Sciatic nerve (tissue), 2 donors: ENCODE measurements at regions of chr7 and their contacts with region 1.

Region 1: DNA sequence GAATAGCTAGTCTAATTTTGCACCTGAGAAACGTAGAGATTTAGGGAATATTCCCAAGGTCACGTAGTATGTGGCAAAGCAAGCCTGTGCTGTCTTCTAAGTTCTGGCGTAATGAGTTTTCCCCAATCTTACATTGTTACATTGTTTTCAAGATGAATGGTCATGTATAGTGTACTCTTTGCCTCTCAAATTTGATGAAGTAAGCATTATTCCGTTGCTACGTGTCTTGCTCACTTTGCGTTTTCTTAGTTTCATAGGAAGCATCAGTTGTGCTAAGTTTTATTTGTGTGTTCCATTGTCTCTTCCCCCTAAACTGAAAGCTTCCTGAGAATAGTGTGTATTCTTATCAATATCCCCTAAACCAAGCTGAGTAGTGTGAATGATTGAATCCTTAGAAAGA is 637.6 kb upstream of the C7orf33 start:
- DNase-seq: no peak
- ATAC-seq: no peak

Region 2: DNA sequence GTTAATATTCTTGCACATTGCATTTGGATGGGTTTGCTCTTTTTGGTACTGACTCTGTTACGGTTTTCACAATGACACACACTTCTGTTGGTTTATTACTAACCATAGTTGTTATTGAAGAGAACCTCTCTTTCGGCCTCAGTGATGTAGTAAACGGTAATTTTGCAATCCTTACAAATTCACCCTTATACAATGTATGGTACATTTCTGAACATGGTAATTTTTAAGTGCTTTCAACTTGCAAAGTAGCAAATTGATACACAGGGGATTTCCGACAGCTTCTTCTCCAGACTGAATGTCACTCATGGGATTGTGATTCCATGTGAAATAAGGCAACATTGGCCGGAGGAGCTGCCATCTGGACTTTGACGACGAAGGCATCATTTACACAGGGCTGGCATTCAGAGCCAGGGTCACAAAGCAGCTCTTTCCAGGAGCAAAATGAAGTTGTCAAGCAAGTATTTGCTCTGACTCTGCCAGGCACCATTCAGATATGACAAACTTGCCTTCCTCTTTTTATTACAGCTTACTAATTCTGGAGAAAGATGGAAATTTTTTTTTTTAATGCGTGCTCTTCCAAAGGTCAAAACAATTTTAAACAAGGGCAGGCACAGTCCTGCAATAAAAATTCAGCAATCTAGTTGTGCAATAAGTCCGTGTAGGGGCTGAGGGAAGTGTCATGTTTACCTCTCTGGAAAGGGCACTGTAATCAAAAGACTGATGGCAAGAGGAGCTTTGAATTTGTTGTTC is 73.8 kb before region 1 on chr7:
- intact Hi-C with region 1: no loop called
- DNase-seq: no peak
- ATAC-seq: no peak

Region 3: DNA sequence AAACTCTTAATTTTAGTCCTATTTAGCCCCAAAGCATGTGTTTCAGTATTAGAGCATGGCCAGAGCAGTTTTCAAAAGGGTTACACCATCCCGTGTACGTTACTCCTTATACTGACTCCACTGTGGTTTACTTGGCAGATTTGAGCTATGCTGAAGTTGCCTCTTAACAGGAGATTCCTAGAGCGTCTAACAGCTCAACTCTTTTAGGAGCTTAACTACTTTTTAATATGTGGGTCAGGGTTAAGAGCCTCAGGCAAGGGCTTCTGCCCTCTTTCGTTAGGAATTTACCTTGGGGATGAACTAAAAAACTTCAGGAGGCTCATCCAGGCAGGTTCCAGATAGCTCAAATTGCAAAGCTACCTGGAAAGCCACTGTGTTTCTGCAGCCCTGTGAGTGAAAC is 37.1 kb before region 1 on chr7:
- intact Hi-C with region 1: loop called (anchors 1 kb)
- DNase-seq: no peak
- ATAC-seq: peak; percentile 64